Head of caudate nucleus (tissue), 42 donors: ENCODE measurements at regions of chr11 and their contacts with region 1.

Region 1: DNA sequence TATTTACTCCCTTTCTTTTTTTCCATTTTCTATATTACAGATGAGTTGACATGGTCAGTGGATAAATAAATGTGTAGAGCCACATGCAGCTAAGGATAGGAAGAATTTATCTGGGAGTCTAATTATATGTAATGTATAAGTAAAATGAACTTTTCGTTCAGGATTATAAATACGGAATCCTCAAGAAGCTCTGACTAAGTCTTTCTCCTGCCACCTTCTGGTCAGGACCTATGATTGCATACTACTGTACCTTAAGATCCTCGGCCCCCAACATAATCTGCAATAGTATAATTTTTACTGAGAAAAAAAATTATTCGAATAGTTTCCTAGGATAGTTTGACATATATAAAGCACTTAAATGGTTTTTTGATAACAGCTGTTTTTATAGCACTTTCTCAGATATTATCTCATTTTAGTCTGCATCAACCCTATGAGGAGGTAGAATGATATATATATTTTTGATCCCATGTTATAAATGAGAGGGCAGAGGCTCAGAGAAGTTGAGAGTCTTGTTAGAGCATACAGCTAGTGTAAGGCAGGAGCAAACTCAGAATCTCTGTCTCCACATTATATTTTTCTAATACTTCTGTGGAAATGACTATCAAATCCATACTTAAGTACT is 36.1 kb downstream of the CCDC90B start:
- DNase-seq: peak in 12 of 42 donors; percentile 5 to 58 (median 33)

Region 2: DNA sequence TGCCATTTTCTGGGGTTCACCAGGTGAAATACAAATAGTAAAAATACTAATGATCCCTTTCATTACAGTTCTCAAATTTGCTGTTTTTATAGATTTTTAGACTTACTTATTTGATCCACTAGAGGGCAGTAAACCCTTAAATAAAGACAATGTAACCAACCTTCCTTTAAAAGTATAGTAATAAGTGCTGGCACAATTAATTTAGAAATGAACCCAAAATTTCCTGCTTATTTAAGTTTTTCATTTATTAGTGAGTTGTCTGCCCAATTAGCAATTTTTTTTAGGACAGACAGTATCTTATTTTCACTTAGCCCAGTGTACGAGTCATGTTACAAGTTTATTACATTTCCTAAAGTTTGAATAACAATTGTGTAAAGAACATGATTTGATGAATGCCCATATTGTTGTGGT is 343.8 kb before region 1 on chr11:
- intact Hi-C with region 1: loop called (anchors 5 kb)
- DNase-seq: no peak